Activated CD4-positive, alpha-beta memory T cell treated with anti-CD3 and anti-CD28 coated beads for 36 hours (primary cell): ENCODE measurements at regions of chr7 and their contacts with region 1.

Region 1: GRCh38 chr7:135645296-135645904 is 16.9 kb upstream of the STMP1 start:
- DNase-seq: no peak
- H3K4me3 Mint-ChIP-seq: no peak overlapping the region
- H3K27ac Mint-ChIP-seq: no peak overlapping the region
- H3K4me1 Mint-ChIP-seq: no peaks in the 10 kb centered on the region
- H3K27me3 Mint-ChIP-seq: no peaks in the 10 kb centered on the region

Region 2: DNA sequence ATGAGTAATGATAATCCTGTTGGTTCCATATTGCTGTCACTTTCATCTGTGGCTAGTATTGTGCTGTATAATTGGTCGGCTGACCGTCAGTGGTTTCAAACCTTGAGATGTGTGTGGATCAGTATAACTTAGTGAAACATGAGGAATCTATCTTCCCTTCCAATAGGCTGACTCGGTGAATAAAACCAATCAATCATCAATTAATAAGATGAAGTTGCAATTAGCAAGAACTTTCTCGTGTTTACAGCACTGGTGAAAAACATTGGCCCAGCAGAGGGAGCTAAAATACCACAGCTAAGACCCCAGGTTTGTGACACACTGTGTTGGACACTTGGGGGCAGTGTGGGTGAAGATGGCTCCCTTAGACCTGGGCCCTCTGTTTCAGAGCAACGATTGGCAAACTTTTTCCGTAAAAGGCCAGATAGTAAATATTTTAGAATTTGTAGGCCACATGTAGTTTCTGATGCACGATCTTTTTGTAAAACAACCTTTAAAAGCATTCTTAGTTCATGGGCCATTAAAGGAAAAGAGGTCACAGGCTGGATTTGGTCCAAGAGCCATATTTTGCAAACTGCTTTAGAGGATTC is 363.9 kb before region 1 on chr7:
- CTCF ChIA-PET with region 1: interaction called, 61 read pairs
- POLR2A ChIA-PET with region 1: no interaction called
- intact Hi-C with region 1: loop called (anchors 1 kb)
- DNase-seq: peak; percentile 85
- H3K4me3 Mint-ChIP-seq: no peak overlapping the region
- H3K27ac Mint-ChIP-seq: peak overlapping the region; percentile 19
- H3K4me1 Mint-ChIP-seq: peaks cover 19% of the 10 kb centered on the region
- H3K27me3 Mint-ChIP-seq: peaks cover 10% of the 10 kb centered on the region

Region 3: GRCh38 chr7:135575296-135575695 is 70.1 kb before region 1 on chr7:
- CTCF ChIA-PET with region 1: interaction called, 13 read pairs
- POLR2A ChIA-PET with region 1: no interaction called
- intact Hi-C with region 1: no loop called
- DNase-seq: no peak
- H3K4me3 Mint-ChIP-seq: no peak overlapping the region
- H3K27ac Mint-ChIP-seq: peak overlapping the region; percentile 61
- H3K4me1 Mint-ChIP-seq: peaks cover 9% of the 10 kb centered on the region
- H3K27me3 Mint-ChIP-seq: no peaks in the 10 kb centered on the region

Region 4: DNA sequence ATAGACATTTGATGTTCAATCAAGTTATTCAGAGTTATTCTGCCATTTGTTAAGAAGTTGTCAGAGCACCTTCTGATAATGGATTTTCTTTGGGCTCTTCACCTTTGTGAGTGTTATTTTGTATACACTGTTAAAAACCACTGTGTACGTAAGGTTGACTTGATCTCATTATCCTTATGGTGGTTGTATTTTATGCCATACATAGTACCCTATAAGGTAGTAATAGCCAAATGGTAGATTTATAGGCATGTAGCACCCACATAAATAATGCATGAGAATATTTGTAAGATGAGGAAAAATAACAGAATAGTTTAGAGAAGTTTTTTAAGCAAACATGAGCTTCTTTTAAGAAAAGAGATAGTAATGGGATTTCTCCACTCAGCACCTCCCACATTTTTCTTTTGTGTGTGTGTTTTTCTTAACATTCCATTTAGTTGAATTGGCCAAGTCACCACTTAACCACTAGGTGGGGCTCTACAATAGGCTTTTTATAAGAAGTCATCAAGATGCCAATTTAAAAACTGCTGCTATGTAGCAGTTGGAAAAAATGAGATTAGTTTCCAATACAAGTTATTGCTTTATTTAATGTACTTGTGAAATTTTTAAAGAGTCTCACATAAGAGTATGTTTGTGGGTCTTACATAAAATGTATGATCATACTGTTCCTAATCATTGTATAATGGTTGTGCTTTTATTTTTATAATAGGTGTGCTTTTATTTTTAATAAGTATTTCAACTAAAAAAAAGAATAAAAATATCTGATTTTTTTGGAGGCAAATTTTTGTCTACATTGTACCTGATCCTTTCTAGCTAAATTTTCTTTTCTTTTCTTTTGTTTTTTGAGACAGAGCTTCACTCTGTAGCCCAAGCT is 24.2 kb before region 1 on chr7:
- CTCF ChIA-PET with region 1: interaction called, 67 read pairs
- POLR2A ChIA-PET with region 1: interaction called, 3 read pairs
- intact Hi-C with region 1: loop called (anchors 2 kb)
- DNase-seq: no peak
- H3K4me3 Mint-ChIP-seq: no peak overlapping the region
- H3K27ac Mint-ChIP-seq: no peak overlapping the region
- H3K4me1 Mint-ChIP-seq: peaks cover 3% of the 10 kb centered on the region
- H3K27me3 Mint-ChIP-seq: no peaks in the 10 kb centered on the region

Region 5: DNA sequence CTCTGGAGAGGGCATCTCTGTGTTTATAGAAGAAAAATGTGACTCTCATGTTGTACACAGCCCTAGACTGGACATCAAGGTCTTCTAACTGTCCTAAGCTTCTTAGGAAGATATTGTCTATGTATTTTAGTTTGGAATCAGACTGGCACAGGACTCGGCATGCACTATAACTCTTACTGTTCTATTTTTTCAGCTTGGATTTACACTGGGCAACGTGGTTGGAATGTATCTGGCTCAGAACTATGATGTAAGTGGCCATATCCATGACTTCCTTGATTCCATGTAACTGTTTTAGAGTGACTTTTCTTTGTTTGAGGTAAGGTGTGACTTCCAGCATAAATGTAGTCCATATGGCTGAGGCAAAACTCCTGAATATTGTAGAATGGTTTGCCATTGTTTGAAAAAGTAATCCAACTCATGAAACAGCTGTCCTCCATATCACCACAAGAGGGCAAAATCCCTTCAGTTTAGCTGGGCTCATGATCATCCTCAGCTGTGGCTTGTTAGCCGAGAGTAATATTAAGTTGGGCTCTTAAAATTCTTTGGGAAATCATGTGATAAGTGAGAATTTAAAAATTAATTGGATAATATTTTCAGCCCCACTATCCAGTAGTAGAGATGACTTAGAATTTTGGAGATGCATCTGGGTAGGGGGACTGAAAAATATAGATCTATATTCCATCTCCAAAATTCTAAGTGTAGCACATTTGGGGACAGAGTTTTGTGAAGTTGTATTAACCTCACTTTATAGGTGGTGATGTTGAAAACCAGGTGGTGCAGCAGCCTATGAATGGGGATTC is 27.4 kb after region 1 on chr7:
- CTCF ChIA-PET with region 1: interaction called, 11 read pairs
- POLR2A ChIA-PET with region 1: no interaction called
- intact Hi-C with region 1: no loop called
- DNase-seq: no peak
- H3K4me3 Mint-ChIP-seq: no peak overlapping the region
- H3K27ac Mint-ChIP-seq: no peak overlapping the region
- H3K4me1 Mint-ChIP-seq: peaks cover 25% of the 10 kb centered on the region
- H3K27me3 Mint-ChIP-seq: no peaks in the 10 kb centered on the region

Region 6: DNA sequence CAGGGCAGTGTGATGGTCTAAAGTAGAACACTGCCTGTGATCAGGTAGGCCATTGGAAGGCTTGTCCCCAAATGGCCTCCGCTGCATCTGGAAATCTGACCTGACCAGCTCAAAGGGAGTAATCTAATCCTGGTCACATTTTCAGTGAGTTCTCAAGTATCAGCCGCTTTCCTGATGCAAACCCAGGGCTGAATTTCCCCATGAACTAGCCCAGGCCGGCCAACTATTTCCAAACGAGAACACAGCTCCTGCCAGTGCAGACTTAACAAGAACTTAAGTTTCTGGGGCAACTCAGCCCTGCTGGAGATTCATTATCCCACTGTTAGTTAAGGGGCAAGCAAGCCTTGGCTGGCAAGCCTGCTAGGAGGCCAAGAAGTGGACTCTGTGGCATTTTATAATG is 162.8 kb after region 1 on chr7:
- CTCF ChIA-PET with region 1: no interaction called
- POLR2A ChIA-PET with region 1: no interaction called
- intact Hi-C with region 1: no loop called
- DNase-seq: no peak
- H3K4me3 Mint-ChIP-seq: no peak overlapping the region
- H3K27ac Mint-ChIP-seq: no peak overlapping the region
- H3K4me1 Mint-ChIP-seq: no peaks in the 10 kb centered on the region
- H3K27me3 Mint-ChIP-seq: no peaks in the 10 kb centered on the region